ENCODE measurements at regions of chr10 and their contacts with region 1.

Region 1: DNA sequence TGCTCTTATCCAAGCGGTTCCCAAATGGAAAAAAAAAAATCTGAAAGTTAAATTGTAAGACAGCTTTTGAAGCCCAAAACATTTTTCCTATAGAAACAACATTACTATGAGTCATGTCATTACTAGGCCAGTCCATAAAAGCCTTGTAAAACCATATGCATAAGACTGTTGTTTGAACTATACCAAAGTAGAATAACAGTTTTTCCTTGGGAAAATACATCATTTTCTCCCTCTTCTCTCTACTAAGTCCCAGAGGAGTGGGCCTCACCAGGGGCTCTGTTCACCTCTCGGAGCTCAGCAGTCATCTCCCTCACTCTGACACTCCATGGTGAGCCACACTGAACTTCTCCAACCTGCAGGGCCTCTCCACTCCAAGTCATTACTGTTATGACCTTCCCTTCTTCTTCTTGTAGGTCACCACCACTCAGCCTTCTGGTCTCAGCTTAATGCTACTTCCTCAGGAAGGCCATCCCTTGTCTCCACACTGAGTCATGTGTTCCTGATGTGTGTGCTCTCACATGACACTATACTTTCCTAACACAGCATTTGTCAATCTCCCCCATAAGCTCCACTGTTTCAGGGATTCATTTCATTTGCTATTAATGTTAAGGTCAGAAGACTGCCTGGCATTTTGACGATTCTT is 32.5 kb downstream of the ZNF438 start:
- DNase-seq: no peak
- H3K4me3 ChIP-seq: no peak overlapping the region
- H3K27me3 ChIP-seq: no peaks in the 10 kb centered on the region
- CTCF ChIP-seq: no peak

Region 2: DNA sequence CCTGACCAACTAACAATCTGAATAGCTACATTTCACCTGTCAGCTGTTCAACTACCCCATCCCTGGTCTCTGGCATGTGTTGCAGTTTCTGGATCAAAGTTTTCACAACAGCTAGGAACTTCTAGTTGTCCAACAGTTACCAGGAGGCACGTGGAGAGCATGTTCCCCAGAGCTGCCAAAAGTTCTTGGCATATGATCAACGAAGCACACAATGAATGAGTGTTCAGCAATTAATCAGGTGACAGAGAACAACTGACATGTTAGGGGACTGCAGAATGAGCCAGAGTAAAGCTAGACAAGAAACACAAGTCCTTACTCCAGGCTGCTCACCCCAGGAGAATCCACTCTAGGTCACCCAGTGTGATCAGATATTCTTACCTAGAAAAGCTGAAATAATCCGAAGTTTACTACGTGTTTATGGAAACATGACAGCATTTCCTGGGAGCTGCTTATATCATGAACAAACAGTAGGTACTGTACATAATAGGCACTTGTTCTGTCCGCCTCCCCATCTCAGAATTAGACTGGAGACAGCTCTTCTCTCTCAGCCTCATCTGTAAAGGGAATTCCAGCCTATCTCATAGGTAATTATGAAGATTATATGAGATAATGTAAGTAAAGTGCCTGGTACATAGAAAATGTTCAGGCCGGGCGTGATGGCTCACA is 18.1 kb before region 1 on chr10:
- CTCF ChIA-PET with region 1: no interaction called
- POLR2A ChIA-PET with region 1: no interaction called
- DNase-seq: no peak
- H3K4me3 ChIP-seq: no peak overlapping the region
- H3K27me3 ChIP-seq: no peaks in the 10 kb centered on the region
- CTCF ChIP-seq: no peak

Region 3: GRCh38 chr10:31031558-31032257 is 32.5 kb after region 1 on chr10 and contains the start of gene ZNF438:
- CTCF ChIA-PET with region 1: no interaction called
- POLR2A ChIA-PET with region 1: interaction called, 21 read pairs
- DNase-seq: peak; percentile 83
- H3K4me3 ChIP-seq: peak within 1 kb of the TSS; percentile 52
- H3K27me3 ChIP-seq: no peaks in the 10 kb centered on the region
- CTCF ChIP-seq: peak; percentile 53
- polyA plus RNA-seq, gene ZNF438: 3.7 and 4.1 TPM in 2 replicates

Region 4: GRCh38 chr10:31723106-31723750 is 724.0 kb after region 1 on chr10:
- CTCF ChIA-PET with region 1: no interaction called
- POLR2A ChIA-PET with region 1: no interaction called
- DNase-seq: no peak
- H3K4me3 ChIP-seq: no peak overlapping the region
- H3K27me3 ChIP-seq: no peaks in the 10 kb centered on the region
- CTCF ChIP-seq: no peak